Right ventricle myocardium inferior (tissue), 1 donor: ENCODE measurements at regions of chr1 and their contacts with region 1.

Region 1: DNA sequence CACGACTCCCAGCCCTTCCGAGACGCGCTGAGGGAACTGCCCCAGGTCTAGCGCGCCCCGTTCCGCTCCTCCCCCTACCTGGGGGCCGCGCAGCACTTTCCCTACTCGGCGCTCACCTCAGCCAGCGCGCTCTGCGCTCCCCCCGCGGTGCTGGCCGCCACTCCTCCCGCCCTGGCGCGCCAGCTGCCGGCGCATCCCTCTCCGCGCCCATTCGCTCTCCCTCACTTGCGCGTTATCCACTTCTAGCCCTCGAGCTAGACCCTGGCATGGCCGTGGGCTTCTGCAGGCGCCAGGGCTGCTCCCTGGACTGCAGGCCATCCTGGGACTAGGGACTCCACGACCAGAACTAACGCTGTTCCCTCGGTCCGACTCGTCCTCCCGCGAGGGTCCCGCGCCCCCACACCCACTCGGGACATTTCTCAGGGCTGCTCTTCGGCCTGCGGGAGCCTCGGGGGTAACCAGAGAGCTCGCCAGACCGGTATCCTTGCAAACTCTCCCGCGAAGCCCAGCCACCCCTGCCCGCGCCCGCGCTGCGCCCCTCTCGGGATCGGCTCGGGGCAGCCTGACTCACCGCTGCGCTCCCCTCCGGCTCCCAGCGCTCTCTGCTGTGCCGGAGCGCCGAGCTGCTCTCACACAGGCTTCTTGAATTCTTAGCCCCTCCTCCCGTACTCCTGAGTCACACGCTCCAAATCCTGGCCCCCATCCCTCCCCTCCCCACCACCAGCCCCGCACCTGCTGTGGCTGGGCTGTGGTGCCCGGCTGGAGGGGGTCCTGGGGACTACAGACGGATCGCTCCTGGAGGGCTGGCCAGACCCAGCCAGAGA is at the start of gene NGF:
- DNase-seq: peak; percentile 84
- ATAC-seq: peak; percentile 86
- total RNA-seq, gene NGF: 4.9 TPM

Region 2: DNA sequence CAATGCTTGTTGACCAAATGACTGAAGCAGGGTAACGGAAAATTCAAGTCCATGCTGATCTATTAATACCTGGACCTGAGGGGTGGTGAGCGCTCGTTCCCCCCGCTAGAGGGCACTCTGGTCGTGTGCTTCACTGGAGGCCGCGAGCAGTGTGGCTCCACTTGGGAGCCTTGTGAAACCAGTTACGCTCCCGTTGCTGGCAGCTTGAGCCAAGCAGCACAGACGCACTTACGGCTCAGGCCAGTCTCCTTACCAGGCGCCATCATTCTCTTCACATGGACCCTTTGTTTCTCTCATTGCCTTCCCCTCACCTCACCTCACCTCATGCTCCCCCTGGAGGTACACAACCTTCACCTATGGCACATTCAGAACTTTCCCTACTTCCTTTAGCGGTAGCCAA is 198.9 kb before region 1 on chr1:
- intact Hi-C with region 1: loop called (anchors 1 kb)
- DNase-seq: peak; percentile 90
- ATAC-seq: peak; percentile 92

Region 3: DNA sequence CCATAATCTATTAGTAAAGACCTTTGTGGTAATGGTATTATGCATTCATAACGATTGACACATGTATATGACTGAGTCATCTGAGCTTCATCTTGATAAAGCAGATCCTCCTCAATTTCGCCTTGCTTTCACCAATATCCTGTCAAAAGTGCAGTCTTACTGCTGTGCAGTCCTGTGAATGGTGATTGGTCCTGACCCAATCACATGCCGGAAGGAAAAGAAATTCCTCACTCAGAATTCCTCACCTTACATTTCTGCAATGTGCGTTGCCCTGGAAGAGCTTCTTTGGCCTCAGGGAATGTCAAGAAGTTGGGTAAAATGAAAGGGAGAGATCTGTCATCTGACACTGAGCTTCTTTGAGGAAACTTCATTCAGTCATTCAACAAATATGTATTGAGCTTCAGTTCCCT is 127.5 kb before region 1 on chr1:
- intact Hi-C with region 1: loop called (anchors 10 kb)
- DNase-seq: no peak
- ATAC-seq: no peak

Region 4: GRCh38 chr1:115266729-115267421 is 71.0 kb before region 1 on chr1:
- intact Hi-C with region 1: no loop called
- DNase-seq: peak; percentile 80
- ATAC-seq: peak; percentile 96

Region 5: GRCh38 chr1:115282807-115283208 is 55.0 kb before region 1 on chr1:
- intact Hi-C with region 1: loop called (anchors 5 kb)
- DNase-seq: peak; percentile 91
- ATAC-seq: peak; percentile 96

Region 6: DNA sequence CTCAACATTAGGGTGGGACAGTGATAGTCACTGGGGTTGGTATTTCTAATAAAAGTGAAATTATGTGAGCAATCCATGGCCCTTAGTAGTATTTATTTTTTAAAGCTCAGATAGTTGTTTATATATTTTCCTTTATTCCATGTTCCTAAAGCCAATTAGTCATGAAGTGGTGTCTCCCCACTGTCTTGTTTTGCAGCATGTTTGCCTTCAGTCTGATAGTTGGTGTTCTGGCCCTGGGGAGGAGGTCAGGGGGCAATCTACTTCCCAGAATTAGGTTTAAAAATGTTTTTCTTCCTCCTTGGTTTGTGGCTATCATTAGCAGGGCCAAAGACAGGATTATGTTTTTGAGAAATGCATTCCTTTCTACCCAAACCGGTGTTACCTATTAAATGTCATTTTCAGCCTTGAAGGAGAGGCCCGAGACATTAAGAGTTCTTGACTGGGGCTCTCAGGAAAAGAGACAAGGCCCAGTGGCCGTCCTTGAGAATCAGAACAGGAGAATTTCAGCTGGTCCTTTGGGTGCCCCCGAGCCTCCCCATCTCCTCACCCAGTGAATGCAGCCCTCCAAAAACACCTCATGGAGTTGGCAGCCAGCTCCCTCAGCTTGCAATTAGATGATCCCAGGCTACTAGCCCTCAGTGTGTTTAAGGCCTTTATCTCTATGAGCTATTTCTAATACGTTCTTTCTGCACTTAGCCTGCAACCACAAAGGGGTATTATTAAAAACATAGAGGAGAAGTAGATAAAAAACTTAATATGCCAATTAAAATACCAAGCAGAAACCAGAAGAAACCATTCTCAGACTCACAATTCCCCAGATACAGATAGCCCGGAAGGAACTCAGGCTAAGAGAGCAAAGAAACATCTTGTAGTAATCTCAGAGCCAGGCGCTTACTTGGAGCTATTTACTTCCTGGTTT is 71.5 kb after region 1 on chr1:
- intact Hi-C with region 1: loop called (anchors 5 kb)
- DNase-seq: no peak
- ATAC-seq: peak; percentile 51

Region 7: DNA sequence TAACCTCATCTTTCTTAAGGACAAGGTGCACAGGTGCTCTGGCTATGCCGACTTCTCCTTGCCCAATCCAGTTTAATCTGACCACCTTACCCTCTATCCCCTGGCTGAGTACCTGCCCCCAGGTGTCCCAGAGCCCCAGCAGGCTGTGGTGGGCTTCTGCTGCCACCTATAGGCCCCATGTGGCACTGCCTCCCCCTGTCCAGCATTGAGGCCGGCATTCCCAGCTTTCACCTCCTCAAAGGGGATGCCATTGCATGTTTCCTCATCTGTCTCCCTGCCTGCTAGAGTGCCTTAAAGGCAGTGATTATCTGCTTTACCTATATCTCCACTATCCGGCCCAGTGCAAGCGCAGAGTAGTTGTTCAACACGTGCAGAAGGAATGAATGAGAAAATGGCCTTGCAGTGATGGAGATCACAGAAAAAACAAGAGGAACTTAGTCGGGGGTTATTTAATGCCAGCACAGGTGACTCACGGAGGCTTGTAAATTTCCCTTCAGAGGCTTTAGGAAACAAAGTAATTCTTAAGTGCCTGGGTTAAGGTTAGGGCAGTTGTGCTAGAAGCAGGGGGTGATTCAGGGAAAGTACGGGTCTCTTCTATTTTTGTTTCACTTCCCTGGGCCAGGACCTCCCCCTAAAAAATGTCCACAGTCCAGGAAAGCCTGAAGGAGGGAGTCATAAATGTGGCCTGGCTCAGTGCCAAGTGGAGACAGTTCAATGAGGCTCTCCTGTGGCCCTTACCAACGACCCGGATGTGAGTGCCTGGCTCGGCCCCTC is 132.0 kb after region 1 on chr1:
- intact Hi-C with region 1: loop called (anchors 10 kb)
- DNase-seq: no peak
- ATAC-seq: peak; percentile 63